Activated CD4-positive, alpha-beta T cell treated with anti-CD3 and anti-CD28 coated beads for 36 hours (primary cell): ENCODE measurements at regions of chr13 and their contacts with region 1.

Region 1: DNA sequence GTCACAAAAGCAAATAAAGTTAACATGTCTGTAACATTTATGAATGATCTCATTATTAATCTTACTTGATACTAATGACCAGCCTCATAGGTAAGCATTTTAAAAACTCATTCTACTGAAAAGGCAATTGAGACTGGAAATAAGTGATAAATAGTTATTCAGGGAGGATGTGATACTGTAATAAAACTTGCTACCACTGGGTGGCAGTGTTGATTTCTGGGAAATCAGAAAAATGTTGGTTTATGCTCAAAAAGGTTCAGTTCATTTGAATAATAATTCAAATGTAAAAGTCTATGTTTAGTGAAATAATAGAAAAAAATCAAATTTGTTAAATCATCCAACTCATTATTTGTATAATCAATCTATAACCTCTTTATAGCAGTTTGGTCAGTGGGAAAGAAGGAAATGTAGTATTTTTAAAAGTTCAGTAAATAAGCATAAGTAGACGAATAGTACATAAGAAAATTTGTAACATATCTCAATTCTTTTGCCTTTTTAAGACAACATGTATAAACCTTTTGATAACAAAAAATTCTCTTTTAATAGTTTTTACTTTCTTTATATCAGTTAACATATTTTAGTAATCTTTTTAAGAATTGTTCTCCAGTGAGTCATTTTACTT is 9.6 kb downstream of the ABHD13 start:
- DNase-seq: peak; percentile 27
- ATAC-seq: no peak
- H3K4me3 Mint-ChIP-seq: no peak overlapping the region
- H3K27ac Mint-ChIP-seq: no peak overlapping the region
- H3K4me1 Mint-ChIP-seq: peaks cover 44% of the 10 kb centered on the region
- H3K27me3 Mint-ChIP-seq: no peaks in the 10 kb centered on the region

Region 2: GRCh38 chr13:108195146-108195545 is 32.6 kb before region 1 on chr13:
- CTCF ChIA-PET with region 1: no interaction called
- POLR2A ChIA-PET with region 1: no interaction called
- intact Hi-C with region 1: no loop called
- DNase-seq: no peak
- ATAC-seq: no peak
- H3K4me3 Mint-ChIP-seq: no peak overlapping the region
- H3K27ac Mint-ChIP-seq: no peak overlapping the region
- H3K4me1 Mint-ChIP-seq: no peaks in the 10 kb centered on the region
- H3K27me3 Mint-ChIP-seq: peaks cover 21% of the 10 kb centered on the region

Region 3: DNA sequence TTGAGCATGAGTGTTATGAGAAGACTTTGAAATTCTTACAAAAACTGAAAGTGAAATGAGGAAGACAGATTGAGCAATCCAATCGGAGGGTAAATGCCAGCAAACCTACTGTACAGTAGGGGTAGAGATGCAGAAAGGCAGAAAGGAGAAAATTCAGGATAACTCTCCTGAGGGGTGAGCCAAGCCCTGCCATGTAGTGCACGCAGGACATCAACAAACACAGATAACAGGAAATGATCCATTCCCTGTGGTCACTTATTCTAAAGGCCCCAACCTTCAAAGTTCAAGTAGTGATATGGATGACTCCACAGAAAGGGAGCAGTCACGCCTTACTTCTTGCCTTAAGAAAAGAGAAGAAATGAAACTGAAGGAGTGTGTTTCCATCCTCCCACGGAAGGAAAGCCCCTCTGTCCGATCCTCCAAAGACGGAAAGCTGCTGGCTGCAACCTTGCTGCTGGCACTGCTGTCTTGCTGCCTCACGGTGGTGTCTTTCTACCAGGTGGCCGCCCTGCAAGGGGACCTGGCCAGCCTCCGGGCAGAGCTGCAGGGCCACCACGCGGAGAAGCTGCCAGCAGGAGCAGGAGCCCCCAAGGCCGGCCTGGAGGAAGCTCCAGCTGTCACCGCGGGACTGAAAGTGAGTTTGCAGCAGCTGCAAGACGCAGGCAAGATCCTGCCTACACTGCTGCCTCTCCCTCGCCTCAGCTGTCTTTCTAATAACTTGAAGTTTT is 42.0 kb after region 1 on chr13 and contains the start of gene TNFSF13B:
- CTCF ChIA-PET with region 1: no interaction called
- POLR2A ChIA-PET with region 1: interaction called, 4 read pairs
- intact Hi-C with region 1: loop called (anchors 2 kb)
- DNase-seq: peak; percentile 77
- ATAC-seq: peak; percentile 69
- H3K4me3 Mint-ChIP-seq: peak within 1 kb of the TSS; percentile 72
- H3K27ac Mint-ChIP-seq: peak within 1 kb of the TSS; percentile 82
- H3K4me1 Mint-ChIP-seq: peaks cover 43% of the 10 kb centered on the region
- H3K27me3 Mint-ChIP-seq: no peaks in the 10 kb centered on the region
- total RNA-seq, gene TNFSF13B: 2.3 to 2.4 TPM

Region 4: GRCh38 chr13:108322206-108322824 is 94.6 kb after region 1 on chr13:
- CTCF ChIA-PET with region 1: no interaction called
- POLR2A ChIA-PET with region 1: no interaction called
- intact Hi-C with region 1: loop called in 1 of 2 experiments (anchors 5 kb)
- DNase-seq: no peak
- ATAC-seq: peak; percentile 83
- H3K4me3 Mint-ChIP-seq: no peak overlapping the region
- H3K27ac Mint-ChIP-seq: no peak overlapping the region
- H3K4me1 Mint-ChIP-seq: peaks cover 11% of the 10 kb centered on the region
- H3K27me3 Mint-ChIP-seq: peaks cover 2% of the 10 kb centered on the region

Region 5: DNA sequence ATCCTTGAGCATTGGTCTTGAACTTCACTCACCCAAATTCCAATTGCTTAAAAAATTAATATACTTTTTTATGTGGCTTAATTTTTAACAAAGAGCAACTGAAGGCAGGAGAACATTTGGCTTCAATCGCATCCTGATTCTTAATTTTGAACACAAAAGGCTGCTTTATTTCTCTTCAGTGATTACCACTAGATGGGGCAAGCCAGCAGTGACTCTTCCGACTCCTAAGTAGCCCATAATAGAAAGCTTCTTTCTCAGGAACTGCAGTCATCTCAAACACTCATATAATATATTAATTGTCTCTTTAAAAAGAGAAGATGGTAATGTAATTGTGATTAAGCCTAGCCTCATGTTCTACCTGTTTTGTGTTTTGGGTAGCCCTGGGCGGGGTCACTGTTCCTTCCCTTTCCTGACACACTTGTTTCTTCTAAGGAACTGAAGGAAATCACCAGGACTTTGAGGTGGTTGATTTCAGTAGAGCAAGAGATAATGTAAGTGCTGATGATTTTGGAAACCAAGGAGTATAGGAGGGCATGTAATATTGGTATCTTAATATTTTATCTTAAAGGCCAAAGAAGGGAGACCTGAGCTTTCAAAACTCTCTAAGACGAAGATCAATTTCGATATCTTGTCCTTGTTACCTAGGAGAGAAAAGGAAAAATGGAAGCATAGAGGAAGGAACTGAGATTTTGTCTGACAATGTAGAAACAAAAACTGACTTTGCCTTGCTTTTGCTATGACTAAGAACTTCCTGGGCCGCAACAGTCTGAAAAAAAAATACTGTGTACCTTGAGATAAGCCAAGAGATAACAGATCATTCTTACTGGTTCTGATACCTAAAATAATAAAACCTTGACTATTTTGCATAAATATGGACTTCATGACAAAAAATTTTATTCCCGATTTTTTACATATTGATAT is 114.9 kb after region 1 on chr13:
- CTCF ChIA-PET with region 1: no interaction called
- POLR2A ChIA-PET with region 1: no interaction called
- intact Hi-C with region 1: loop called in 1 of 2 experiments (anchors 5 kb)
- DNase-seq: no peak
- ATAC-seq: peak; percentile 51
- H3K4me3 Mint-ChIP-seq: no peak overlapping the region
- H3K27ac Mint-ChIP-seq: peak overlapping the region; percentile 11
- H3K4me1 Mint-ChIP-seq: peaks cover 11% of the 10 kb centered on the region
- H3K27me3 Mint-ChIP-seq: no peaks in the 10 kb centered on the region

Region 6: DNA sequence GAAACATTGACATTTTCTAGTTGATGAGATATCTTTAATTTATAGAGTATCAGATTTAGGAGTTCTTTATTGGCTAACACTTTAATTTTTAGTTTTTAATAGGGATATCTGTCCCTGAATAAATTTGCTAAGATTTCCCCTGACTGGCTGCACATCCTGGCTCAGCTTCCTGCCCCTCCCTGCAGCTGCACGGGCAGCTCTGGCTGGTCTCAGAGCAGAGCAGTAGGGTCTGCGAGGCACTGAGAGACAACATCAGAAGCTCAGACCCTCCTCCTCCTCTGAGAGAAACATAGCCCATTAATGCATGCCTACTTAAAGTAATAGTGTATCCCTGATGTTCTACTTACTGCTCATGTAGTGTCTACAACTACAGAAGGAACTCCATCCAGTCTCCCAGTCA is 180.9 kb after region 1 on chr13:
- CTCF ChIA-PET with region 1: no interaction called
- POLR2A ChIA-PET with region 1: no interaction called
- intact Hi-C with region 1: loop called in 1 of 2 experiments (anchors 2 kb)
- DNase-seq: no peak
- ATAC-seq: no peak
- H3K4me3 Mint-ChIP-seq: no peak overlapping the region
- H3K27ac Mint-ChIP-seq: no peak overlapping the region
- H3K4me1 Mint-ChIP-seq: peaks cover 44% of the 10 kb centered on the region
- H3K27me3 Mint-ChIP-seq: no peaks in the 10 kb centered on the region

Region 7: DNA sequence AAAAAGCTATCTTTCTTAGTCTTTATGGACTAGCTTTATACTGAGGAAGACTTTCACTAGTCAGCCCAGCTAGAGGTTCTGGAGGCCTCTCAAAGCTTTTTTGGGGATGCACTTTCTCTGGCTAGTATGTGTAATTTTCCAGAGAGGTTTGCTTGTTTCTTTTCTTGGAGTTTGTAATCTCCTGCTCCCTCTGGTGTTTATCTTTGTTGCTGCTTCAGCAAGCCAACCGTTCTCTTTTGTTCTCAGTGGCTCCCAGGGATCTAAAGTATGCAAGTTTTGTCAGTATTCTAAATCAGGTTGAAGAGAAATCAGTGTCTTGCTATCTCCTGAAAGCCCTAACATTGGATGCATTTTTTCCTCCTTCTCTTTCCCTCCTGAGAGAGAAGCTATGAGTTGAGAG is 280.5 kb after region 1 on chr13:
- CTCF ChIA-PET with region 1: no interaction called
- POLR2A ChIA-PET with region 1: no interaction called
- intact Hi-C with region 1: loop called in 1 of 2 experiments (anchors 5 kb)
- DNase-seq: no peak
- ATAC-seq: no peak
- H3K4me3 Mint-ChIP-seq: no peak overlapping the region
- H3K27ac Mint-ChIP-seq: no peak overlapping the region
- H3K4me1 Mint-ChIP-seq: no peaks in the 10 kb centered on the region
- H3K27me3 Mint-ChIP-seq: no peaks in the 10 kb centered on the region

Region 8: GRCh38 chr13:108895220-108895704 is 667.5 kb after region 1 on chr13:
- CTCF ChIA-PET with region 1: interaction called, 4 read pairs
- POLR2A ChIA-PET with region 1: no interaction called
- intact Hi-C with region 1: loop called (anchors 2 to 5 kb)
- DNase-seq: no peak
- ATAC-seq: no peak
- H3K4me3 Mint-ChIP-seq: no peak overlapping the region
- H3K27ac Mint-ChIP-seq: no peak overlapping the region
- H3K4me1 Mint-ChIP-seq: peaks cover 11% of the 10 kb centered on the region
- H3K27me3 Mint-ChIP-seq: peaks cover 10% of the 10 kb centered on the region